PC-9 (cell line): ENCODE measurements at regions of chr7 and their contacts with region 1.

Region 1: DNA sequence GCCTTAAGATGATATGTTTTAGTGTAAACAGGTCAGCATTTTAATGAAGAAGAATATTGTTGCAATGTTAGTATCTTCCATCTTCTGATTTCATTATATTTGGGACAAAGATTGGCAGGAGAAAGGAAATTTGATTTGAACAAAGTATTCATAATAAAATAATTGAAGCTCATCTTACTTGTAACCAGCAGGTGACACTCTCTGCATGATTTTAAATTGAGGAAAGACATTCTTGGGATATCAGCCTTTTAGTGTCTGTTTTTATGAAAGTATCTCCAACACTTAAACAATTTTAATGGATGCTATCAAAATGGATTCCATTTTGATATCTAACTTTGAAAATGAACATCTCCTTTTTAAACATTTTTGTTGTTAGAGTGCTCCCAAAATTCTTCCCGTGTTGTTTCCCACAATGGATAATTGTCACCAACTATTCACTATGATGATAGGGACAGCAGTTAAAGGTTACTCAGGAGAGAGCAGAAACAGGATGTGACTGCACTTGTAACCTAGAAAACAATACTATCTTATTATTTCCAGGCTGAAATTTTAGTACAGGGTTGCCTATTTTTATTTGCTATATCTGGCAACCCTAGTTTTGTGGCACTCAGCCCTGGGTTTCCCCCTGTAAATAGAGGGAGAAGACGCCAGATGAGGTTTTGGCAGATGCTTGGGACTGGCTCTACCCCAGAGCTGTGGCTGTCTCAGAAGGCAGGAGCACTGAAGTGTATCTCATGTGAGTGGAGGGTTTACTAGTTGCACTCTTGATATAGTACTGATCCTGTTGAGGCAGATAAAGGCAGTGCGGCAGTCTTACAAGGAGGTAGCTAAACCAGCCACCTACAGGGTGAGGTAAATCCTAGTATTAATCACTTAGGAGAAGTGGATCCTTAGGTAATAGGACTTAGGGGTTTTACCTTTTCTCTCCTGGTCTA is 31.0 kb upstream of the ABCB4 start:
- DNase-seq: no peak
- H3K4me3 ChIP-seq: no peak overlapping the region
- H3K27ac ChIP-seq: no peak overlapping the region
- H3K4me1 ChIP-seq: no peaks in the 10 kb centered on the region
- H3K27me3 ChIP-seq: no peaks in the 10 kb centered on the region
- CTCF ChIP-seq: peak; percentile 67

Region 2: DNA sequence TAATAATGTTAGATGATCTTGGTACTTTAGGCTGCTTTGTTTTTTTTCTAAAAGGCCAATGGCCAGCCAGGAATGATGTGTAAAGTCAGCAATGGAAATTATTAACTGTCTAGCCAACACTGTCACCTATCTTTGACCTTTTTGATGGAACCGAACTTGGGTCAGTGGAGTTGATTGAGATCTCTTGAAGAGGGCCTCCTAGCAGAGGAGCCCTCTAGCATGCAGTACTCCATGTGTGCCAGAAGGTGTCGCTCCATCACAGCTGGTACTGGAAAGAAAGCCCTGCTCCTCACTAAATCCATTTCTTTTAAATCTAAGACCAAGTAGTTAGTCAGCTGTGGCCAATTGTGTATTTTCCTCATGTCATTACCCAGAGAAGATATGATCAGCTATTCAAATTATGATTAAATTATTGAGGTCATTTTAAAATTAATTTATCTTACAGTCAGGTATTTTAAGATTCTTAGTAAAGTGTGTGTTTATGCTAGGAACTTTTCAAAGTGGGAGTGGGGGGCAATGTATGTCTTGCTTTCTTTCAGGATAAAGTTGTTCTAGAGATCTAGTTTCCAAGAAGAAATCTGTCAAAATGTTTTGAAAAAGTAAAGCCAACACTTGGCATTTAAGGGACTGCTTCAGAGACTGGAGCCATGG is 194.2 kb before region 1 on chr7:
- CTCF ChIA-PET with region 1: interaction called, 11 read pairs
- POLR2A ChIA-PET with region 1: no interaction called
- intact Hi-C with region 1: loop called (anchors 1 kb)
- DNase-seq: peak; percentile 53
- H3K4me3 ChIP-seq: no peak overlapping the region
- H3K27ac ChIP-seq: no peak overlapping the region
- H3K4me1 ChIP-seq: peaks cover 16% of the 10 kb centered on the region
- H3K27me3 ChIP-seq: no peaks in the 10 kb centered on the region
- CTCF ChIP-seq: peak; percentile 98

Region 3: DNA sequence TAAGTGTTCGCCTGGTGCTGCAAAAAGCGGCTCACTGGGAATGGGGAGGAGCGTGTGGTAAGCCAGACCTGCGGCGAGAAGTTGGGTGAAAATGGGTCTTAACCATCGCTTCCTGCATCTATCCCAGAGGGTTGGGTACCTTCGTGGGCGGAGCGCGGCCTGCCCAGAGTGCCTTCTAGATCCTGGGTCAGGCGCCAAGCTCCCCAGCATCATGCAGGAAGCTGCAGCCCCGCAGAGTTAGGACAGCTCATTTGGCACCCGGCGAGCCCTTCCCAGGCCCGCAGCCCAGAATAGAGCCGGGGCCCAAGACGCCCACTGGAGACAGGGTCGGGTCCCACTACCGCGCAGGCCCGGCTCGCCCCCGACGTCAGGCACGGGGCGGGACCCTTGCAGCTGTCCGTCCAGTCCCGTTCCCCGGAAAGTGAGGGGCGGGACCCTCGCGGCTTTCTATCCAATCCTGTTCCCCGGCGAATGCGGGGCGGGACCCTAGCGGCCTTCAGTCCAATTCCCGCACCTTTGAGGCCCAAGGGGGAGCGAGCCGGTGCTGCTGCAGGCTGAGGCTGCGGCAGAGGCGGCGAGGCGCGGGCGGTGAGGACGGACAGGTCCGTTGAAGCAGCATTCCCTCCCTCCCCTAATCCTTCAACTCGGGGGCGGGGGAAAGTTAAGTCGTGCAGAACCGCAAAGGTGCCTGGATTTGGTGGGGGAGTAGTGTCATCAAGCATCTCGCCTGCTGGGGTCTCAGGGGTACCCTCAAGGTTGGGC is 161.2 kb before region 1 on chr7 and contains the start of gene CROT:
- CTCF ChIA-PET with region 1: no interaction called
- POLR2A ChIA-PET with region 1: no interaction called
- intact Hi-C with region 1: no loop called
- DNase-seq: peak; percentile 82 to 96
- H3K4me3 ChIP-seq: peak within 1 kb of the TSS; percentile 93
- H3K27ac ChIP-seq: no peak within 1 kb of the TSS
- H3K4me1 ChIP-seq: peaks cover 17% of the 10 kb centered on the region
- H3K27me3 ChIP-seq: no peaks in the 10 kb centered on the region
- CTCF ChIP-seq: no peak
- total RNA-seq, gene CROT: 13.4 and 15.2 TPM in 2 replicates

Region 4: DNA sequence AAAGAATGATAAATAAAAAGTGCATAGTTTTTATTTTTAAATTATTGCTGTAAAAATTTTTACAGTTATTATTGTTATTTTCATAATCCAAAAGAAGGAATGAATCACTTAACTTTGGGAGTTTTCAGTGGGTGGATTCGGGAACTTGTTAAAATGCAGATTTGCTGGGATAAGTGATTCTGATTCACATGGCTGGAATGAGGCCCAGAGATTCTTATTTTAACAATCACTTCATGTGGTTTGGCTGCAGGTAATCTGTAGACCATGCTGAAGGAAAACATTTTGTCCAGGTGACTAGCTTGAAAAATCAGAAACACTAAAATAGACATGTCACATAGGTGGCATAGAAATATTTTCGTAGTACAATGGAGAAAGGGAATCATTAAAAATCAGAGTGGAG is 147.1 kb before region 1 on chr7:
- CTCF ChIA-PET with region 1: no interaction called
- POLR2A ChIA-PET with region 1: no interaction called
- intact Hi-C with region 1: no loop called
- DNase-seq: peak; percentile 9 to 35
- H3K4me3 ChIP-seq: no peak overlapping the region
- H3K27ac ChIP-seq: 0 out of 2 replicates have a peak overlapping the region, but pooled peaks have one; percentile 19
- H3K4me1 ChIP-seq: no peaks in the 10 kb centered on the region; the same call in 1 of the 2 replicates
- H3K27me3 ChIP-seq: no peaks in the 10 kb centered on the region
- CTCF ChIP-seq: no peak

Region 5: GRCh38 chr7:87628780-87629569 is 122.5 kb after region 1 on chr7:
- CTCF ChIA-PET with region 1: no interaction called
- POLR2A ChIA-PET with region 1: no interaction called
- intact Hi-C with region 1: loop called (anchors 10 kb)
- DNase-seq: peak in 1 of 2 experiments; percentile 41
- H3K4me3 ChIP-seq: peak overlapping the region; percentile 73
- H3K27ac ChIP-seq: no peak overlapping the region
- H3K4me1 ChIP-seq: no peaks in the 10 kb centered on the region
- H3K27me3 ChIP-seq: no peaks in the 10 kb centered on the region
- CTCF ChIP-seq: no peak

Region 6: GRCh38 chr7:87886875-87887274 is 380.4 kb after region 1 on chr7:
- CTCF ChIA-PET with region 1: interaction called, 7 read pairs
- POLR2A ChIA-PET with region 1: no interaction called
- intact Hi-C with region 1: loop called (anchors 1 kb)
- DNase-seq: peak in 1 of 2 experiments; percentile 37
- H3K4me3 ChIP-seq: no peak overlapping the region
- H3K27ac ChIP-seq: no peak overlapping the region
- H3K4me1 ChIP-seq: no peaks in the 10 kb centered on the region
- H3K27me3 ChIP-seq: no peaks in the 10 kb centered on the region
- CTCF ChIP-seq: peak; percentile 71